Ascending aorta (tissue), 2 donors: ENCODE measurements at regions of chr6 and their contacts with region 1.

Region 1: DNA sequence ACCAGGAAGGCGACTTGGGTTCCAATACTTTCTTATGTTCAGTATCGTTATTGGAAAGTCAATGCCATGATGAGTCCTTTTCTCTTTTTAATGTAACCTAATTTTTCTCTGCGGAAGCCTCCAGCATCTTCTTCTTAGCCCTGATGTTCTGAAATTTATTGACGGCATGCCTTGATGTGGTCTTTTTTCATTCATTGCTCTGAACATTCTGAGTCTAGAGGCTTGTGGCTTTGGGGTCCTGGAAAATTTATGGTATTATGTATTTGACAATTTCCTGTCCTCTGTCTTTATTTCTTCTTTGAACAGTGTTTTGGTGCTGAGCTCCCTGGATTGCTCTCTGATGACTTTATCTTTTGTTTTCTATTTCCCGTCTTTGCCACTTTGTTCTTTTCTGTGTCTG is 28.7 kb upstream of the MAS1 start:
- DNase-seq: no peak
- H3K4me3 ChIP-seq: no peak overlapping the region
- H3K27ac ChIP-seq: no peak overlapping the region
- H3K4me1 ChIP-seq: no peaks in the 10 kb centered on the region
- H3K27me3 ChIP-seq: no peaks in the 10 kb centered on the region
- CTCF ChIP-seq: no peak

Region 2: DNA sequence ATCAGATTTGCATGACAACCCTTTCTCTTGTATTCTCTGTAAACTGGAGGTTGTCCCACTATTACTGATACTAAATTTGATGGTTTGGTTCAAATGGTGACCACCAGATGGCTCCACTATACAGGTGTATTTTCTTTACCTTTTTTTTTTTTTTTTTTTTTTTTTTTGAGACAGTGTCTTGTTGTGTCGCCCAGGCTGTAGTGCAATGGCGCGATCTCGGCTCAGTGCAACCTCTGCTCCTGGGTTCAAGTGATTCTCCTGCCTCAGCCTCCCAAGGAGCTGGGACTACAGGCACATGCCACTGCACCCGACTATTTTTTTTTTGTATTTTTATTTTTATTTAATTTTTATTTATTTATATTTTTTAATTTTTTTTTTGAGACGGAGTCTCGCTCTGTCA is 141.4 kb before region 1 on chr6:
- intact Hi-C with region 1: no loop called
- DNase-seq: no peak
- H3K4me3 ChIP-seq: no peak overlapping the region
- H3K27ac ChIP-seq: no peak overlapping the region
- H3K4me1 ChIP-seq: peaks cover 6 to 16% of the 10 kb centered on the region in 2 donors
- H3K27me3 ChIP-seq: no peaks in the 10 kb centered on the region
- CTCF ChIP-seq: peak in 2 of 3 experiments; percentile 12 to 22

Region 3: DNA sequence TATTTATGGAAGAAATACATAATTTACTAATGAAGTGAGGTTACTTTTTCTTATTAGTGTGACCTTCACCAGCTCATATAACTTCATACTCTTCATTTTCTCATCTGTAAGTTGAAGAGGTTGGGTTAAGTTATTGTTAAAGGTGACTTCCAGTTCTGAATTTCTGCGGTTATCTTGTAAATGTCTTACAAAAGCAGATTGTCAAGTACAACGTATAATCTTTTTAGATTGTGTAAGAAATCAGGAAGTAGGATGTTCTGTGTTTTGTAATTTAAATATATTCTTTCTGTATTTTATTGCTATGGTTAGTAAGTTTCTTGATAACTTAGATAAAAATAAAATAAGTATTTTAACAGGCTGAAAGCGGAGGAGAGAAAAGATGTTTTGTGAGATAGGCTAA is 122.8 kb before region 1 on chr6:
- intact Hi-C with region 1: no loop called
- DNase-seq: no peak
- H3K4me3 ChIP-seq: no peak overlapping the region
- H3K27ac ChIP-seq: no peak overlapping the region
- H3K4me1 ChIP-seq: peaks cover 0 to 13% of the 10 kb centered on the region in 2 donors
- H3K27me3 ChIP-seq: no peaks in the 10 kb centered on the region
- CTCF ChIP-seq: no peak

Region 4: DNA sequence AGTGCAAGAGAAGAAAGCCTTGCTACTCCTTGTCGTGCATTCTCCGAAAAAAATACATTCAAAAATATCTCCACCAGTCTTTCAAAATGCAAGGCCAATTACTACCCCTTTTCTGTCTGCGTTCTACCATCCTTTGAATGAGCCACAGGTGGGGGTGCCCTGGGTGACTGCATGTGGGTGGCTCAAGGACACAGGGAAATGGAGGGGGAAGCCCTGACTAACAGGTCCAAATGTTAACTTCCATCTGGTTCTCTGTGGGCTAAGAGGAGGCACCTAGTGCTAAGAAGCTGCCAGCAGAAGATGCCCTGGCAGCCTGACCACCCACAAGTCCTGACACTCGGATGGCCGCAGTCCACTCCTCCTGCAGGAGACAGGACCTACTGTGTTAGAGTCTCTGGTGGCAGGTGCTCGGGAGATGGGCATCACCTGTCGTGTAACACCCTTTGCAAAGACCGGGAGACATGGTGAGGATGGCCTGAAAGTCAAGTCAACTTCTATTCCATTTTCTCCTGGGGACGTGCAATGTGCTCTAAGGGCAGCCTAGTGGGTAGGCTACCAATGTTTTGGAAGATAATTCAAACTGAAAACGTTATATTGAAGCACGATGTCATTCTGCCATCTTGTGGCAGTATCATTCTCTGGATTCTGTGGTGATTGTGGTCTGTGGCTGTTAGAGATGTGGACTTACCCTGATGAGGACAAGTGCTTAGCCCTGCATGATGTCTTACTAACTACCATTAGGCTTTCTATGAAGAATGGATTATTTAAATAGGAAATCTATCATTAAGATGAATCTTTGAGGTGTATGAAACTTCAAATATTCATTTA is 79.4 kb after region 1 on chr6:
- intact Hi-C with region 1: loop called (anchors 1 kb)
- DNase-seq: no peak
- H3K4me3 ChIP-seq: no peak overlapping the region
- H3K27ac ChIP-seq: no peak overlapping the region
- H3K4me1 ChIP-seq: peaks cover 6 to 25% of the 10 kb centered on the region in 2 donors
- H3K27me3 ChIP-seq: no peaks in the 10 kb centered on the region
- CTCF ChIP-seq: peak; percentile 38 to 66 (median 53)

Region 5: GRCh38 chr6:160534050-160534696 is 672.1 kb after region 1 on chr6:
- intact Hi-C with region 1: loop called (anchors 2 kb)
- DNase-seq: peak in 1 of 2 donors; percentile 80
- H3K4me3 ChIP-seq: peak overlapping the region in 1 of 2 donors; percentile 39
- H3K27ac ChIP-seq: no peak overlapping the region
- H3K4me1 ChIP-seq: peaks cover 0 to 3% of the 10 kb centered on the region in 2 donors
- H3K27me3 ChIP-seq: no peaks in the 10 kb centered on the region
- CTCF ChIP-seq: peak; percentile 75 to 96 (median 87)